ENCODE measurements at regions of chr19 and their contacts with region 1.

Region 1: GRCh38 chr19:41934849-41935374 is 6.7 kb upstream of the ERFL start:
- DNase-seq: peak; percentile 63 to 89 (median 81)
- ATAC-seq: peak; percentile 37
- H3K4me3 ChIP-seq: no peak overlapping the region
- H3K4me3 Mint-ChIP-seq: peak overlapping the region; percentile 32
- H3K27ac ChIP-seq: no peak overlapping the region
- H3K27ac Mint-ChIP-seq: peak overlapping the region; percentile 84
- H3K4me1 ChIP-seq: peaks cover 45% of the 10 kb centered on the region
- H3K4me1 Mint-ChIP-seq: peaks cover 55% of the 10 kb centered on the region
- H3K27me3 ChIP-seq: peaks cover 0 to 5% of the 10 kb centered on the region in 2 experiments
- H3K27me3 Mint-ChIP-seq: no peaks in the 10 kb centered on the region
- CTCF ChIP-seq: peak; percentile 87

Region 2: GRCh38 chr19:41541990-41542584 is 392.8 kb before region 1 on chr19:
- CTCF ChIA-PET with region 1: no interaction called
- POLR2A ChIA-PET with region 1: no interaction called
- intact Hi-C with region 1: no loop called
- DNase-seq: peak; percentile 55 to 89 (median 83)
- ATAC-seq: no peak
- H3K4me3 ChIP-seq: no peak overlapping the region
- H3K4me3 Mint-ChIP-seq: no peak overlapping the region
- H3K27ac ChIP-seq: no peak overlapping the region
- H3K27ac Mint-ChIP-seq: no peak overlapping the region
- H3K4me1 ChIP-seq: peaks cover 46% of the 10 kb centered on the region
- H3K4me1 Mint-ChIP-seq: peaks cover 43% of the 10 kb centered on the region
- H3K27me3 ChIP-seq: no peaks in the 10 kb centered on the region
- H3K27me3 Mint-ChIP-seq: peaks cover 4% of the 10 kb centered on the region
- CTCF ChIP-seq: peak; percentile 73

Region 3: DNA sequence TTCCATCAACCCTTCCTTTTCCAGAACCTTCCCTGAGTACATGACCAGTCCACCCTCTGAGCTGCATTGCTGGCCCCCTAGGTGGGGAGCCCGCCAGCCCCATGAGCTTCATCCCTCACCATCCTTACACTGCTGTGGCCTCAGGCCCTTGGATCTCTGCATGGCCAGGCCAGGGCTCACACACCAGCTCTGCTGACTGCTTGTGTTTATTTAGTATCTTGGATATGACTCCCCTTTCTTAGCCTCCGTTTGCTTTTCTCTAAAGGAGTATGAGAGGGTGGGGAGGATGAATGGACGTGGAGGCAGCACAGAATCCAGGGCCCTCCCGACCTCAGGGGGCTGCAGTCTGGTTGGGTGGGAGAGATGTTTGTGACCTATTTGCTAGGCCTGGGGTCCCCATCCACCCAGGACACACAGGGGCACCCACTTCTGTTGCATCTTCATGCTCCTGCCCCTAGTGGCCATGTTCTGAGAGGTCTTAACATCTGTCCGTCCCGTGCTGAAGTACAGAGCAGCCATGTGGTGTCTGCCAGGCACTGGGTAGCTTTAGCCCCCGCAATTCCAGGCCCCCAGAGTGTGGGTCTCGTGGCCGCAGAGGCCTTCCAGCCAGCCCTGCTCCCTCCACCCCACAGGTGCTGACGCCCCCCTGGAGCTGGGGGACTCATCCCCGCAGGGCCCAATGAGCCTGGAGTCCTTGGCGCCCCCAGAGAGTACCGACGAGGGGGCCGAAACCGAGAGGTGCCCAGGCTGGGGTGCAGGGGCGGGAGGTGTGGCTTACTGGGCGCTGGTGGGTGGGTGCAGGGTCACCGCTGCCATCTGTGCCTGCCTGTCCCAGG is 38.9 kb before region 1 on chr19:
- CTCF ChIA-PET with region 1: interaction called, 8 read pairs
- POLR2A ChIA-PET with region 1: interaction called, 4 read pairs
- intact Hi-C with region 1: loop called in 1 of 2 experiments (anchors 2 kb)
- DNase-seq: peak in 3 of 9 experiments; percentile 40 to 62 (median 48)
- ATAC-seq: peak; percentile 64
- H3K4me3 ChIP-seq: no peak overlapping the region
- H3K4me3 Mint-ChIP-seq: peak overlapping the region; percentile 61
- H3K27ac ChIP-seq: peak overlapping the region; percentile 37 to 59
- H3K27ac Mint-ChIP-seq: peak overlapping the region; percentile 90
- H3K4me1 ChIP-seq: peaks cover 88% of the 10 kb centered on the region
- H3K4me1 Mint-ChIP-seq: peaks cover 69% of the 10 kb centered on the region
- H3K27me3 ChIP-seq: no peaks in the 10 kb centered on the region
- H3K27me3 Mint-ChIP-seq: no peaks in the 10 kb centered on the region
- CTCF ChIP-seq: peak; percentile 36

Region 4: GRCh38 chr19:41945135-41945766 is 10.3 kb after region 1 on chr19:
- CTCF ChIA-PET with region 1: interaction called, 10 read pairs
- POLR2A ChIA-PET with region 1: interaction called, 4 read pairs
- intact Hi-C with region 1: loop called (anchors 1 kb)
- DNase-seq: peak; percentile 80 to 98 (median 91)
- ATAC-seq: peak; percentile 82
- H3K4me3 ChIP-seq: no peak overlapping the region
- H3K4me3 Mint-ChIP-seq: peak overlapping the region; percentile 69
- H3K27ac ChIP-seq: peak overlapping the region; percentile 62 to 66
- H3K27ac Mint-ChIP-seq: peak overlapping the region; percentile 99
- H3K4me1 ChIP-seq: peaks cover 40% of the 10 kb centered on the region
- H3K4me1 Mint-ChIP-seq: peaks cover 61% of the 10 kb centered on the region
- H3K27me3 ChIP-seq: peaks cover 0 to 4% of the 10 kb centered on the region in 2 experiments
- H3K27me3 Mint-ChIP-seq: no peaks in the 10 kb centered on the region
- CTCF ChIP-seq: no peak

Region 5: GRCh38 chr19:41951686-41952172 is 16.8 kb after region 1 on chr19:
- CTCF ChIA-PET with region 1: interaction called, 10 read pairs
- POLR2A ChIA-PET with region 1: no interaction called
- intact Hi-C with region 1: loop called (anchors 1 to 2 kb)
- DNase-seq: peak; percentile 73 to 97 (median 89)
- ATAC-seq: peak; percentile 88
- H3K4me3 ChIP-seq: no peak overlapping the region
- H3K4me3 Mint-ChIP-seq: no peak overlapping the region
- H3K27ac ChIP-seq: no peak overlapping the region
- H3K27ac Mint-ChIP-seq: peak overlapping the region; percentile 85
- H3K4me1 ChIP-seq: peaks cover 15% of the 10 kb centered on the region
- H3K4me1 Mint-ChIP-seq: peaks cover 31% of the 10 kb centered on the region
- H3K27me3 ChIP-seq: no peaks in the 10 kb centered on the region
- H3K27me3 Mint-ChIP-seq: no peaks in the 10 kb centered on the region
- CTCF ChIP-seq: peak; percentile 96